ENCODE measurements at regions of chr12 and their contacts with region 1.

Region 1: DNA sequence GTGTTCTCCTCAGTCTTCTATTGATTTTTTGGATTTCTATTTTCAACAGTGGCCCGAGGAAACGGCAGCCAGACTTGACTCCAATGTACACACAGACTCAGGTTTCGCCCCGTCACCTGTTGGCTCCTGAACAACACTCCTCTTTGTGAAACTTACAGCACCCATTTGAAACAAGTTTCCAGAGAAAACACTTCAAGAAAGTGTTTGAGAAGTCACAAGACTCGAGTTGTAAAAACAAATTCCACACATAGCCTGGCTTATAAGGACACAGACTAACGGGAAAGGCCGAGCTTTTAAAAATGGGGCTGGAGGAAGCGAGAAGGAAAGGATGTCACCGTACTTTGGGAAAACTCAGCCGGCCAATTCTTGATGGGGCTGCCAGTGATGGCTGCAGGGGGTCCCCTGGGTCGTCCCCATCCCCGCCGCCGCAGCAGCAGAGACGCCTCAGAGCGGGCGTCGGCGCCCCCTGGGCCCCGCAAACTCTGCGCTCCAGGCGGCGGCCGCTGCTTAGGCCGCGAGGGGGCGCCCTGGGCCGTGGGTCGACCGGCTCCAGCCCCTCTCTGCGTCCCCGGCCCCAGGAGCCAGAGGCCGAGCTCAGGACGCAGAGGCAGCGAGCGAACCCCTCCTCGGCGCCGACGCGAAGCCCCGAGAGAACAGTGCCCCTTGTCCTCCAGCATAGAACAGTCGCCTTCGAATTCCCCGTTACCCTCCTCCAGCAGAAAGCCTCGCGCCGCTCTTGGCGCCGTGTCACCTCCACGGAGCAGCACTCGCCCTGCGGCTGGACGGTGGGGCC is 106.9 kb downstream of the PRICKLE1 start:
- DNase-seq: peak; percentile 89
- ATAC-seq: peak; percentile 71
- H3K4me3 ChIP-seq: peak overlapping the region; percentile 67 to 96 (median 94)
- H3K4me3 Mint-ChIP-seq: peak overlapping the region; percentile 97
- H3K27ac ChIP-seq: peak overlapping the region; percentile 76 to 82
- H3K27ac Mint-ChIP-seq: peak overlapping the region; percentile 94
- H3K4me1 ChIP-seq: peaks cover 49 to 55% of the 10 kb centered on the region in 2 donors
- H3K4me1 Mint-ChIP-seq: peaks cover 60% of the 10 kb centered on the region
- H3K27me3 ChIP-seq: no peaks in the 10 kb centered on the region
- H3K27me3 Mint-ChIP-seq: no peaks in the 10 kb centered on the region
- CTCF ChIP-seq: peak; percentile 90

Region 2: GRCh38 chr12:42237052-42237852 is 245.4 kb before region 1 on chr12:
- CTCF ChIA-PET with region 1: interaction called, 4 read pairs
- POLR2A ChIA-PET with region 1: interaction called, 4 read pairs
- intact Hi-C with region 1: loop called (anchors 5 kb)
- DNase-seq: peak; percentile 84
- ATAC-seq: peak; percentile 74
- H3K4me3 ChIP-seq: peak overlapping the region; percentile 48 to 84 (median 66)
- H3K4me3 Mint-ChIP-seq: peak overlapping the region; percentile 98
- H3K27ac ChIP-seq: peak overlapping the region; percentile 28 to 74
- H3K27ac Mint-ChIP-seq: peak overlapping the region; percentile 95
- H3K4me1 ChIP-seq: peaks cover 15 to 27% of the 10 kb centered on the region in 2 donors
- H3K4me1 Mint-ChIP-seq: peaks cover 35% of the 10 kb centered on the region
- H3K27me3 ChIP-seq: no peaks in the 10 kb centered on the region
- H3K27me3 Mint-ChIP-seq: no peaks in the 10 kb centered on the region
- CTCF ChIP-seq: peak; percentile 53

Region 3: GRCh38 chr12:42450248-42450647 is 32.4 kb before region 1 on chr12:
- CTCF ChIA-PET with region 1: interaction called, 7 read pairs
- POLR2A ChIA-PET with region 1: interaction called, 4 read pairs
- intact Hi-C with region 1: loop called (anchors 1 kb)
- DNase-seq: no peak
- ATAC-seq: no peak
- H3K4me3 ChIP-seq: no peak overlapping the region
- H3K4me3 Mint-ChIP-seq: no peak overlapping the region
- H3K27ac ChIP-seq: peak overlapping the region in 1 of 2 donors; percentile 21
- H3K27ac Mint-ChIP-seq: peak overlapping the region; percentile 66
- H3K4me1 ChIP-seq: peaks cover 75 to 81% of the 10 kb centered on the region in 2 donors
- H3K4me1 Mint-ChIP-seq: peaks cover 78% of the 10 kb centered on the region
- H3K27me3 ChIP-seq: no peaks in the 10 kb centered on the region
- H3K27me3 Mint-ChIP-seq: no peaks in the 10 kb centered on the region
- CTCF ChIP-seq: no peak

Region 4: DNA sequence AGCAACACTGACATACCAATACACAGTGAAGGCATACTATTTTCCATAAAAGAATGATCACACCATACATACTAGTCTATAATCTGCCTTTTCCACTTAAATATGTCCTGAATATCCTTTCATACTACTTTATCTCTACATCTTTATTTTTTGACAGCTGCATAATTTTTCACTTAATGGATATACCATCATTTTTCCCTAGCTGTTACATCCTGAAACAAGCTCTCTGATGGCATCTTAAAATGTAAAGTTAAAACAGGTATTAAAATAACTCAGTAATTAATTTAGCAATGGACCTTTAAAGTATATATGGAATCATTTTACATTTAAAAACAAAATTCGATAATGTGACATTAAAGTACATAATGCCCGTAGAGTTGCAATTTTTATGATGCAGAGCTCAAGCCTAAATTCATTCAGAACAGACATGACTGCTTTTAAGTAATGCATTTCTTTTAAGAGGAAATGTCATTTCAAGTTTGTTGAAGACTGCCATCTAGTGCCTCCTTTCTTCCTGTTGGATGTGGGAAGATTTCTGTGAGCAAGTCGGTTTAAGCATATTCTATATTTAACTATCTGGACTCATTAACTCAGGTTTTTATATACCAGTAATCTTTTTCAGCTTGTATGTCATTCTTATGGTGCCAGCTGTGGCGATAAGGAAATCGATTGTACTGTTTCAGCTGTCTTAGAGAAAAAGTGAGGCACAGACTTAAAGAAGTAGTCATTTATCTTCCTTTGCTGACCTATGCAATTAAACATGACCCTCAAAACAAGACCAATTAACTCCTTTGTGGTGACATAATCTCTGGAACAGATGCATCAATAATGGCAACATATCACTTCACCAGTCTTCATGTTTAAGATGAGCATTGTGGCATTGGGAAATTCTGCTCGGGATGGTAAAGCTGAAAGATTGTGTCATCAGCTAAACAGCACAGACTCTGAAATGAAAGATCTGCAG is 86.6 kb after region 1 on chr12:
- CTCF ChIA-PET with region 1: interaction called, 110 read pairs
- POLR2A ChIA-PET with region 1: no interaction called
- intact Hi-C with region 1: loop called (anchors 1 kb)
- DNase-seq: peak; percentile 72
- ATAC-seq: no peak
- H3K4me3 ChIP-seq: no peak overlapping the region
- H3K4me3 Mint-ChIP-seq: no peak overlapping the region
- H3K27ac ChIP-seq: no peak overlapping the region
- H3K27ac Mint-ChIP-seq: no peak overlapping the region
- H3K4me1 ChIP-seq: no peaks in the 10 kb centered on the region
- H3K4me1 Mint-ChIP-seq: peaks cover 5% of the 10 kb centered on the region
- H3K27me3 ChIP-seq: no peaks in the 10 kb centered on the region
- H3K27me3 Mint-ChIP-seq: no peaks in the 10 kb centered on the region
- CTCF ChIP-seq: peak; percentile 79

Region 5: DNA sequence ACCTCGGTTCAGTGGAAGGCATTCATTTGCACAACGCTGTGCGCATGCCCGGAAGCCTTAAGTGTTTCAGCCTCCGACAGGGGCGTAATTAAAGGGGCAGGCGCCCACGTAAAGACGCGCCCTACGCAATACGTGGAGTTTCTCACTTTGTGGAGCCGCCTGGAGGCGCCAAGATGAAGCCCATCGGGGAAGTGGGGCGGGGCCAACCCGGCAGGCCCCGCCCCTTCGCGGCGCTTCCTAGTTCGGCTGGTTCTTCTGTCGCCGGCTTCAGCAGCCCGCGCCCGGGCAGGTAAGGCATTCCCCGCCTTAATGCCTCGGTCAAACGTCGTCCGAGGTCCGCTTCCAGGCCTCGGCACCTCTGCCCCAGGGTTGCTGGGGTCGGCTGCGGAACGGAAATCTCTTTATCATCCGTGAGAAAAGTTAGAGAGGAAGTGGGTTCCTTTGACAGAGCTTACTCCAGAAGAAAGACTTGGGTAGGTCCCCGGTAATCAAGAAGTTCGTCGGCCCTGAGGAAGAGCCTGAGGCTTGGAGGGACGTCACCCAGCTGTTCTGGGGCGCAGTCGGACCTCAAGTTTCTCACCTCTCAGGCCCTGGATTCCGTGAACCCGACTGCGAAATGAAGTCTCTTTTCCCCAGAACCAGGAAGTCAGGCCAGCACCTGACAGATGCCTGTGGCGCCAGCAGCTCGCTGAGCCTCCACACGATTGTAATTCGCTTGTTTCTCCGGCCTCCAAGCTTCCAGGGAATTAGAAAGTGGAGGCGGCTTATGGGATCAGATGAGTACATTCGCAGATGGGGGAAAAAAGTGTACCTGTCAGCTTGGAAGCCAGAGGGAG is 1276.3 kb after region 1 on chr12 and contains the starts of genes IRAK4 and PUS7L:
- CTCF ChIA-PET with region 1: no interaction called
- POLR2A ChIA-PET with region 1: no interaction called
- intact Hi-C with region 1: loop called (anchors 5 kb)
- DNase-seq: peak; percentile 98
- ATAC-seq: peak; percentile 99
- H3K4me3 ChIP-seq: peak within 1 kb of the TSS; percentile 79 to 98 (median 92)
- H3K4me3 Mint-ChIP-seq: peak within 1 kb of the TSS; percentile 97
- H3K27ac ChIP-seq: peak within 1 kb of the TSS; percentile 95 to 96
- H3K27ac Mint-ChIP-seq: peak within 1 kb of the TSS; percentile 91
- H3K4me1 ChIP-seq: peaks cover 36% of the 10 kb centered on the region in 2 donors
- H3K4me1 Mint-ChIP-seq: peaks cover 70% of the 10 kb centered on the region
- H3K27me3 ChIP-seq: no peaks in the 10 kb centered on the region
- H3K27me3 Mint-ChIP-seq: no peaks in the 10 kb centered on the region
- CTCF ChIP-seq: peak; percentile 35
- total RNA-seq, gene IRAK4: 47.0 and 52.7 TPM in 2 replicates
- total RNA-seq, gene PUS7L: 23.5 and 24.2 TPM in 2 replicates

Measured in B cell (primary cell).